CD8-positive, alpha-beta T cell (primary cell): ENCODE measurements at regions of chr14 and their contacts with region 1.

Region 1: DNA sequence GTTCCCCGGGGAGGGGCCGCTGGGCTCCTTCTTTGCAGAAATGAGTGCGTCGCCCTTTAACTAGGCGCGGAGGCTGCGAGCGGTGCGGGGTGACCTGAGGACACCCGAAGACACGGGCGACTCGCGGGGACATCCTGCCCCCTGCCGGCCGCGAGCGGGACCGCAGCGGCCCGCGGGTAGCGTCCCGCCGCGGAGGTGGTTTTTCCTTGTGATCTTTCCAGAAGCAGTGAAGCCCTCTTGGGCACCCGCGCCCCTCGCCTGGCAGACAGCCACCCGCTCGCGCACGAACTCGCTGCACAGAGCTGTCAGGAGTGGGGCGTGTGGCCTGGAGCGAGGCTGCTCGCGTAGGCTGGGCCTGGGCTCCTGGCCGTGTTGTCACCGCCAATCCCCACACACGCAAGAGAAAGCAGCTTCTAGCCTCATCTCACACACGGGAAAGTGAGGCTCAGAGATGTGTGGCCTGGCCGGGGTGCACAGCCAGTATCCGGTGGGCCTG is 67.2 kb downstream of the DIO3 start:
- DNase-seq: peak; percentile 57 to 89 (median 74)
- ATAC-seq: peak; percentile 99
- H3K4me3 ChIP-seq: no peak overlapping the region
- H3K4me3 Mint-ChIP-seq: peak overlapping the region; percentile 39
- H3K27ac ChIP-seq: no peak overlapping the region
- H3K27ac Mint-ChIP-seq: no peak overlapping the region
- H3K4me1 ChIP-seq: peaks cover 13% of the 10 kb centered on the region
- H3K4me1 Mint-ChIP-seq: peaks cover 4% of the 10 kb centered on the region
- H3K27me3 ChIP-seq: no peaks in the 10 kb centered on the region
- H3K27me3 Mint-ChIP-seq: peaks cover 2% of the 10 kb centered on the region
- CTCF ChIP-seq: peak; percentile 97

Region 2: DNA sequence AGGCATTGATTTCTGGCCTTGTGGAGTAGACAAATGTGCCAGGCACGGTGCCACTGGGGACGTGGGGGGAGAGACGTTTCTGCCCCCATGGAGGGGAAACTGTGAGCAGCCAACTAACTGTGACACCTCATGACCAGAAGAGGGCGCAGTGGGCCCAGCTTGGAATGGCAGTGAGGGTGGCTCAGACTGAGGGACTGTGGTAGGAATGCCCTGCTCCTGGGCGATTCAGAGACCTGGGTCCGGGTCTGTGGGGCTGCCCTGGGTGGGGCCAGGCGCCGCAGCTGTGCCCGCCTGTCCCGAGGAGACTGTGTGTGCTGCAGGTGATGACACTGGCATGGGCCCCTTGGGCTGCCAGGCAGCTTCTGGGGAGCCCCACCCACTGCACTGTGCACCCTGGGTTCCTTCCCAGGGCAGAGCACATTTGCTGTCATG is 1244.8 kb before region 1 on chr14:
- CTCF ChIA-PET with region 1: interaction called, 4 read pairs
- POLR2A ChIA-PET with region 1: no interaction called
- intact Hi-C with region 1: loop called in 1 of 2 experiments (anchors 1 kb)
- DNase-seq: peak; percentile 38 to 79 (median 67)
- ATAC-seq: peak; percentile 93
- H3K4me3 ChIP-seq: no peak overlapping the region
- H3K4me3 Mint-ChIP-seq: no peak overlapping the region
- H3K27ac ChIP-seq: no peak overlapping the region
- H3K27ac Mint-ChIP-seq: no peak overlapping the region
- H3K4me1 ChIP-seq: peaks cover 10% of the 10 kb centered on the region
- H3K4me1 Mint-ChIP-seq: peaks cover 16% of the 10 kb centered on the region
- H3K27me3 ChIP-seq: no peaks in the 10 kb centered on the region
- H3K27me3 Mint-ChIP-seq: no peaks in the 10 kb centered on the region
- CTCF ChIP-seq: peak; percentile 82

Region 3: GRCh38 chr14:100654814-100655740 is 973.4 kb before region 1 on chr14:
- CTCF ChIA-PET with region 1: interaction called, 3 read pairs
- POLR2A ChIA-PET with region 1: no interaction called
- intact Hi-C with region 1: loop called in 1 of 2 experiments (anchors 2 kb)
- DNase-seq: peak in 7 of 9 experiments; percentile 29 to 66 (median 49)
- ATAC-seq: peak; percentile 65
- H3K4me3 ChIP-seq: no peak overlapping the region
- H3K4me3 Mint-ChIP-seq: no peak overlapping the region
- H3K27ac ChIP-seq: no peak overlapping the region
- H3K27ac Mint-ChIP-seq: no peak overlapping the region
- H3K4me1 ChIP-seq: no peaks in the 10 kb centered on the region
- H3K4me1 Mint-ChIP-seq: peaks cover 3% of the 10 kb centered on the region
- H3K27me3 ChIP-seq: peaks cover 5 to 8% of the 10 kb centered on the region in 2 experiments
- H3K27me3 Mint-ChIP-seq: peaks cover 27% of the 10 kb centered on the region
- CTCF ChIP-seq: peak; percentile 44

Region 4: GRCh38 chr14:100662879-100663760 is 965.4 kb before region 1 on chr14:
- CTCF ChIA-PET with region 1: interaction called, 7 read pairs
- POLR2A ChIA-PET with region 1: no interaction called
- intact Hi-C with region 1: loop called in 1 of 2 experiments (anchors 1 kb)
- DNase-seq: peak; percentile 22 to 72 (median 61)
- ATAC-seq: no peak
- H3K4me3 ChIP-seq: no peak overlapping the region
- H3K4me3 Mint-ChIP-seq: no peak overlapping the region
- H3K27ac ChIP-seq: no peak overlapping the region
- H3K27ac Mint-ChIP-seq: no peak overlapping the region
- H3K4me1 ChIP-seq: no peaks in the 10 kb centered on the region
- H3K4me1 Mint-ChIP-seq: no peaks in the 10 kb centered on the region
- H3K27me3 ChIP-seq: no peaks in the 10 kb centered on the region
- H3K27me3 Mint-ChIP-seq: peaks cover 17% of the 10 kb centered on the region
- CTCF ChIP-seq: peak; percentile 95

Region 5: DNA sequence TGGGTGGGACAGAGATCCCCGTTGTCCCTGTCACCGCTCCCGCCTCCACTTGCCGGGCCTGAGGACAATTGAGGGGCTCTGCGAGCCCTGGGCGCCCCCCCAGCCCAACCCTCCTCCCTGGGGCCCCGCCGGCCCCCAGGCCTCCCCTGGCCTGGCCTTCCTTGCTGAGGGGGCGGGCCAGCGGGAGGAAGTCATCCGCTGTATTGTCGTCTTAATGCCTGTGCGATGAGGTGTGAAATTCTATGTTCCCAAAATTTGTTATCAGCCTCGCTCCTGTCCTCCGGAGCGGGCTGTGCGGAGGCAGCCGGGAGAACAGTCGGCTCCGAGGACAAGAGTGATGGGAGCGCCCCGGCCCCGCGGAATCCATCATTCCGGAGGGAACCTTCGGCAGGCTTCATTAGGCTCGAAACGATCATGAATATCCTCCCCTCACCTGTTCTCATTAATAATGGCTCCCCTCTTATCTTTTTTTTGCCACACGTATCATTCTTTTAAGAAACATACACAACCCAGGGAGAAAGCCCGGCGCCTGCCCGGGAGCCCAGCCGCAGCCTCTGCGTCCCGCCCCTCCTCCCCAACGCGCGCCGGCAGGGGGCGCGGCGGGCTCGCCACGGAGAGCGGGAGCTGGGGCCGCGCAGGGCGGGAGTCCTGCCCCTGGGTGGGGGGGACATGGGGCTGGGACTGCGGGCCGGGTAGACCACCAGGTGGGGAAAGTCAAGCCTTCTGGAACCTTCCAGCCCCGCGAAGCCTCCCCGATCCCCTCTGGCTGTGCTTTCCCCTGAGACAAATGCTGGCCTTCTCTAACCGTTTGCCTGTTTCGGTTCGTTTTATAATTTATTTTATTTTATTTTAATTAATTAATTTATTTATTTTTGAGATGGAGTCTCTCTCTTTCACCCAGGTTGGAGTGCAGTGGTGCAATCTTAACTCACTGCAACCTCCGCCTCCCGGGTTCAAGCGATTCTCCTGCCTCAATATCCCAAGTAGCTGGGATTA is 918.9 kb before region 1 on chr14:
- CTCF ChIA-PET with region 1: no interaction called
- POLR2A ChIA-PET with region 1: no interaction called
- intact Hi-C with region 1: loop called in 1 of 2 experiments (anchors 2 kb)
- DNase-seq: peak in 3 of 9 experiments; percentile 24 to 38 (median 34)
- ATAC-seq: no peak
- H3K4me3 ChIP-seq: no peak overlapping the region
- H3K4me3 Mint-ChIP-seq: no peak overlapping the region
- H3K27ac ChIP-seq: no peak overlapping the region
- H3K27ac Mint-ChIP-seq: no peak overlapping the region
- H3K4me1 ChIP-seq: no peaks in the 10 kb centered on the region
- H3K4me1 Mint-ChIP-seq: no peaks in the 10 kb centered on the region
- H3K27me3 ChIP-seq: peaks cover 0 to 2% of the 10 kb centered on the region in 2 experiments
- H3K27me3 Mint-ChIP-seq: peaks cover 20% of the 10 kb centered on the region
- CTCF ChIP-seq: no peak

Region 6: DNA sequence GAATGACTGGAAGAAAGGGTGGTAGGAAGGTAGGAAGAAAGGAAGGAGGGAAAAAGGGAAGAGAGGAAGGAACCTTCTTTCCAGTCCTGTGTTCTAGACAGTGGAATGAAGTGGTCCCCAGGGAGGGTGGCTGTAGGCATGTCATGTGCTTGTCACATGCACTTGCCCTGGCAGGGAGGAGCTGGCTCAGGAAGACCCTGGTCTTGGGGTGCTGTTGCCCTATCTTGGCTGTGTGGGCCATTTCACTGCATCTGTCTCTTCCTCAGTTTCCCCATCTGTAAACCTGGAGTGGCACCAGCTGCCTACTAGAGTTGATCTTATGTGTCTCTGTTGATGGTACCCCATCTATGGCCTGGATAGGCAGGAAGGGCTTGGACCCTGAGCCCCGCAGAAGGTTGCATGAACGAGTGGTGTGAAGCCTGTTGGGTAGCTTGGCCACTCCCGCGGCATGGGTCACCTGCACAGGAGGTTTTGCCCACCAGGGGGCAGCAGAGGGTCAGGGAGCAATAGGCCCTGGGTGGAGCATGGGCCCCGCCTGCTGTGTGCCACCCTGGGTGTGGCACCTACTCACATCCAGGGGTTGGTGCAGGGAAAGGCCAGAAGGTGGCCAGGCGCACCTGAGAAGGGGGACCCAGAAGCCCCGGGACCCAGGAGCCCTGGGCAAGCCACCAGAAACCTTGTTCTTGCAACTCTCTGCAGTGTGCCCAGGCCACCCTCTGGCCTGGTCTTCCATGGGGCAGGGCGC is 777.5 kb before region 1 on chr14:
- CTCF ChIA-PET with region 1: interaction called, 50 read pairs
- POLR2A ChIA-PET with region 1: interaction called, 3 read pairs
- intact Hi-C with region 1: loop called in 1 of 2 experiments (anchors 1 kb)
- DNase-seq: peak; percentile 63 to 89 (median 73)
- ATAC-seq: peak; percentile 69
- H3K4me3 ChIP-seq: no peak overlapping the region
- H3K4me3 Mint-ChIP-seq: no peak overlapping the region
- H3K27ac ChIP-seq: no peak overlapping the region
- H3K27ac Mint-ChIP-seq: no peak overlapping the region
- H3K4me1 ChIP-seq: peaks cover 5% of the 10 kb centered on the region
- H3K4me1 Mint-ChIP-seq: no peaks in the 10 kb centered on the region
- H3K27me3 ChIP-seq: no peaks in the 10 kb centered on the region
- H3K27me3 Mint-ChIP-seq: no peaks in the 10 kb centered on the region
- CTCF ChIP-seq: peak; percentile 59

Region 7: DNA sequence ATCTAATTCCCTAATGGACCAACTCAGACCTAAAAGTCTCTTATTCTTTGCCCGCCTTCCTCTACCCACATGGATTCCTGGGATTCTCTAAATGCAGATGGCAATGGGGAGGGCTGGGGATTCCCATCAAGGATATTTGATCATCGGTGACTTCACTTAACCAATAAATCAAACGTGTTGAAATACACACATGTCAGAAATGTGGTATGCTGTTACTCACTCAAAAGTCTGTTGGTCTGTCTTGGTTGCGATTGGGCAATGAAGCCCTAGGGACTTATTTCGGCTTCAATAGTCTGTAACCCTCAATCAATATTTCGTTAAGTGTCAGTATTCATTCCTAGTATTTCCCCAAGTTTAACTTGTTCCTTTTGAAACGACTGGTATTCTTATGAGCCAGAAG is 184.4 kb before region 1 on chr14:
- CTCF ChIA-PET with region 1: no interaction called
- POLR2A ChIA-PET with region 1: no interaction called
- intact Hi-C with region 1: no loop called
- DNase-seq: no peak
- ATAC-seq: no peak
- H3K4me3 ChIP-seq: no peak overlapping the region
- H3K4me3 Mint-ChIP-seq: peak overlapping the region; percentile 8
- H3K27ac ChIP-seq: no peak overlapping the region
- H3K27ac Mint-ChIP-seq: no peak overlapping the region
- H3K4me1 ChIP-seq: peaks cover 32% of the 10 kb centered on the region
- H3K4me1 Mint-ChIP-seq: peaks cover 29% of the 10 kb centered on the region
- H3K27me3 ChIP-seq: peaks cover 19 to 21% of the 10 kb centered on the region in 2 experiments
- H3K27me3 Mint-ChIP-seq: peaks cover 65% of the 10 kb centered on the region
- CTCF ChIP-seq: no peak

Region 8: DNA sequence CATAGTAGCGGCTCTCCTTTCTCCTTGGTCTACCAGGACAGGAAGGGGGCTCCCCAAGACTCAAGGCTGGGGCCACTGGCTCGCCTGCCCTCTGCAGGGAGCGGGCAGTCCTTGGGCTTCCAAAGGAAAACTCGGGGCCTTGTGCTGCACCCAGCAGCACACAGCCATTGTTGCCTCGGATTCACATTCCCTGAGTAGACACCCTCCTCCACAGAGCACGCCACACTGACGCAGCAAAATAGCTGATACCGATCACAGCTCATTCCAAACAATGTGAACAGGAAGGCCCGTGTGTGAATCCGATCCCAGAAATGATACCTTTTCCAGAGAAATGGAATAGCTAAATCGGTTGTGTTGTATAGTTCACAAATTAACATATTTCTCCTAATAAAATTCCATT is 270.7 kb after region 1 on chr14:
- CTCF ChIA-PET with region 1: no interaction called
- POLR2A ChIA-PET with region 1: no interaction called
- intact Hi-C with region 1: no loop called
- DNase-seq: no peak
- ATAC-seq: no peak
- H3K4me3 ChIP-seq: no peak overlapping the region
- H3K4me3 Mint-ChIP-seq: no peak overlapping the region
- H3K27ac ChIP-seq: no peak overlapping the region
- H3K27ac Mint-ChIP-seq: no peak overlapping the region
- H3K4me1 ChIP-seq: no peaks in the 10 kb centered on the region
- H3K4me1 Mint-ChIP-seq: no peaks in the 10 kb centered on the region
- H3K27me3 ChIP-seq: no peaks in the 10 kb centered on the region
- H3K27me3 Mint-ChIP-seq: no peaks in the 10 kb centered on the region
- CTCF ChIP-seq: no peak

Region 9: GRCh38 chr14:102046343-102047278 is 418.1 kb after region 1 on chr14:
- CTCF ChIA-PET with region 1: no interaction called
- POLR2A ChIA-PET with region 1: no interaction called
- intact Hi-C with region 1: no loop called
- DNase-seq: peak in 5 of 9 experiments; percentile 12 to 55 (median 26)
- ATAC-seq: peak; percentile 54
- H3K4me3 ChIP-seq: no peak overlapping the region
- H3K4me3 Mint-ChIP-seq: no peak overlapping the region
- H3K27ac ChIP-seq: no peak overlapping the region
- H3K27ac Mint-ChIP-seq: no peak overlapping the region
- H3K4me1 ChIP-seq: no peaks in the 10 kb centered on the region
- H3K4me1 Mint-ChIP-seq: no peaks in the 10 kb centered on the region
- H3K27me3 ChIP-seq: no peaks in the 10 kb centered on the region
- H3K27me3 Mint-ChIP-seq: no peaks in the 10 kb centered on the region
- CTCF ChIP-seq: no peak

Region 10: DNA sequence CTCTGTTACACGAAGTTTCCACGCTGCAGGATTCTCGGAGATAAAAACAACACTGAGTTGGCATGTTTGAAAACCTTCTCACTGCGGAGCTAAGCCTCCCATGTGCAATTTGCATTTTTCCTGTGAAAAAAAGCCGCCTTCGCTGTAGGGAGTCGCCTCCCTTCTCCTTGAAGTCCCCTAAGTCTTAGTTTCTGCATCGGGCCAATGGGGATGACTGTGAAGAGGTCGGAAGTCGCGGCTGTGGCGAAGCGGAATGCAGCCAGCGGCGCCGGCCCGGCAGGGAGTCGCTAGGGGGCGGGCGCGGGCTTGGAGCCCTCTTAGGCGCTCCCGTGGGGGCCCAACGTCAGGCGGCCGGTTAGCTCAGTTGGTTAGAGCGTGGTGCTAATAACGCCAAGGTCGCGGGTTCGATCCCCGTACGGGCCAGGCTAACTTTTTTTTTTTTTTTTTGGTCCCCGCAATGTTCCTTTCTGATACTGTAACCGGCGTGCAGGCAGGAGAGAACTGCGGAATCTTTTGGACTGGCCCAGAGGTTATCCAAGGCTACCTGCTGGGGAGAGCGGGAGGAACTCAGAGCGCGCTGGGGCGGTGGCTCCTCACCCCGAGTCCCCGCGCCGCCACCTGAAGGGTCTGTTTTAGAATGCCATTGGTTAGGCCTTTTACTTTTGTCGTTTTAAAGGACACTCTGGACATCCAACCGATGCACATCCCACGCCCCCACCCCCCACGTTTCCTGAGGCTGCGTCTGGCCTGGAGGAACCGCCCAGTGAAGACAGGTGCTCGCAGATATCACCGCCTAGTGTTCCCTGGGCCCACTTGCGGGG is 688.4 kb after region 1 on chr14:
- CTCF ChIA-PET with region 1: no interaction called
- POLR2A ChIA-PET with region 1: no interaction called
- intact Hi-C with region 1: no loop called
- DNase-seq: peak; percentile 86 to 100 (median 95)
- ATAC-seq: peak; percentile 55
- H3K4me3 ChIP-seq: peak overlapping the region; percentile 57 to 74
- H3K4me3 Mint-ChIP-seq: peak overlapping the region; percentile 93
- H3K27ac ChIP-seq: peak overlapping the region; percentile 42 to 73
- H3K27ac Mint-ChIP-seq: peak overlapping the region; percentile 94
- H3K4me1 ChIP-seq: peaks cover 42% of the 10 kb centered on the region
- H3K4me1 Mint-ChIP-seq: peaks cover 59% of the 10 kb centered on the region
- H3K27me3 ChIP-seq: no peaks in the 10 kb centered on the region
- H3K27me3 Mint-ChIP-seq: no peaks in the 10 kb centered on the region
- CTCF ChIP-seq: peak; percentile 82